IMR-90 (cell line): ENCODE measurements at regions of chr12 and their contacts with region 1.

Region 1: DNA sequence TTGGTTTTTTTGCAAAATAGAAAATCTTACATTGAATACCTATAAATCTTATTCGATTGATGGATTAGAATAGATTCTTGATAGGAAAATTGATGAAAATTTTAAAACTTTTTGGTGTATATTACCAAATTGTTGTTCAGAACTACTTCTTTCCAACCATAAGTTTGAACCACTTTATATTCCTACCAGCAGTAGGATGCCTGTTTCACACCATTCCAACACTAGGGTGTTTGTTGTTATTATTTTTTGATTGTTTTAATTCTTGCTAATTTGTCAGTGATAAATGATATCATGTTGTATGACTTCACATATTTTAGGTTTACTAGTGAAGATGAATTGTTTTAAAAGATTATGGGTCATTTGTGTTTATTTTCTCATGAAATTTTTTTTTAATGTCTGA is 43.4 kb downstream of the UTP20 start:
- DNase-seq: no peak
- ATAC-seq: no peak
- H3K4me3 ChIP-seq: no peak overlapping the region
- H3K27ac ChIP-seq: no peak overlapping the region
- H3K4me1 ChIP-seq: no peaks in the 10 kb centered on the region
- H3K27me3 ChIP-seq: no peaks in the 10 kb centered on the region
- CTCF ChIP-seq: no peak
- POLR2A ChIP-seq: no peak
- RAD21 ChIP-seq: no peak

Region 2: GRCh38 chr12:101172316-101172715 is 150.9 kb before region 1 on chr12:
- CTCF ChIA-PET with region 1: no interaction called
- POLR2A ChIA-PET with region 1: no interaction called
- dilution Hi-C with region 1: no loop called
- in situ Hi-C with region 1: no loop called
- intact Hi-C with region 1: loop called (anchors 1 kb)
- DNase-seq: peak; percentile 10
- ATAC-seq: peak; percentile 53; the same call in 1 of the 2 replicates
- H3K4me3 ChIP-seq: no peak overlapping the region
- H3K27ac ChIP-seq: no peak overlapping the region
- H3K4me1 ChIP-seq: no peaks in the 10 kb centered on the region
- H3K27me3 ChIP-seq: no peaks in the 10 kb centered on the region
- CTCF ChIP-seq: no peak
- POLR2A ChIP-seq: no peak
- RAD21 ChIP-seq: 0 out of 2 replicates have a peak, but pooled peaks have one; percentile 4

Region 3: DNA sequence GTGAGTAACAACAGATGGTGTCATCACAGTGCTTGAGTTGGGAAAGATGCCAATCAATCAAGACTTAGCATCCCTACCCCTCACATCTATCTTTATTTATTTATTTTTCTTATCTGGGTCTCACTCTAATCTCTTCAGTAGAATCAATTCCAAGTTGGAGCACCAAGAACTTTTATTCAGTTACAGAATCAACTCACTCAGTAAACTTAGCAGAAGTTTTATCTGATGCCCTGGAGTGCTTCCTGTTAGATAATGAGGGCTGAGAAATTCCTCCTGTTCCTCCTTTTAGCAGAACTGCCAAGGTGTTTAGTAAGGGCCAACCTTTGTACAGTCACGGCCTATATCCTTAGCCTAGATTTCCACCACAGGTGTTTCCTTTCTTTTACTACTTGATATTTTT is 102.0 kb before region 1 on chr12:
- CTCF ChIA-PET with region 1: no interaction called
- POLR2A ChIA-PET with region 1: no interaction called
- dilution Hi-C with region 1: no loop called
- in situ Hi-C with region 1: no loop called
- intact Hi-C with region 1: no loop called
- DNase-seq: no peak
- ATAC-seq: no peak
- H3K4me3 ChIP-seq: no peak overlapping the region
- H3K27ac ChIP-seq: no peak overlapping the region
- H3K4me1 ChIP-seq: no peaks in the 10 kb centered on the region
- H3K27me3 ChIP-seq: no peaks in the 10 kb centered on the region
- CTCF ChIP-seq: no peak
- POLR2A ChIP-seq: no peak
- RAD21 ChIP-seq: no peak